Naive thymus-derived CD4-positive, alpha-beta T cell (primary cell): ENCODE measurements at regions of chr7 and their contacts with region 1.

Region 1: DNA sequence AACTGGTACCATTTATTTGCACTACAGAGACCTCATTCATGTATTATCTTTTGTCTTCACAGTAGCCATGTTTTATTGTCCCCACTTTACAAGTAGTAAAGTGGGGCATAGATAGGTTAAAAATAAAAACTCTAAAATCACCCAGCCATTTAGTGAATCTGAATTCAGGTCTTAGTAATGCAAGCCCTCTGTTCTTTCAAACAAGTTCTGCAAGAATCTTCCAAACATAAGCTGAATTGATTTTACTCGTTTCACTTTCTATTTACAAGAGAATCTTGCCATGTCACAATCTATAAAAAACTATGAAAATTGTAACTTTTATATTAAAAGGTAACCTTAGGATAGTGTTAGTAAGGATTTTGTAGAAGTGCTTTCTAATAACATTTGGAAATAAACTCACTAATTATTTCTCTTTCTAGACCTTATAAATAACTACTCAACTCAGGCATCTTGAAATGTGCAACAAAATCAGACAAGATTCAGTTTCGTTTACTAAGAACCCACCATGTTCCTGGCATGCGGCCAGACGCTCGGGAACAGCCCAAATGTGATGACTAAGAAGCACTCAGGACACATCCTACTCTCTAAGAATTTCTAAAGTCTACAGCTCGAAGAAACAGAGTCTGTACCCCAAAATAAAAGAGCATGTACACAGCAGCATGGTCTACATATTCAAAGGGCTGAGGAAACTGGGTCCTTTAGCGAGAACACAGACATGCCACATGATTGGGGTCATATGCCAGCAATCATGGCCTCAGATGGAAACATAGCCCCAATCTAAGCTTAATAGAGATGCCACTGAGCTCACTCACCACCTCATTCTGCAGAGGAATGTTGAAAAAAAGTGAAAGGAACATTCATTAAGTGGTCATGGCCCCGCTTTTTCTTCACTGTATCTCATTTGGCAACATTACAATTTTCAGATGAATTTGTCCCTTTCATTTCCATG is 167.6 kb downstream of the AMPH start:
- DNase-seq: peak; percentile 40 to 75 (median 61)
- ATAC-seq: peak; percentile 69
- H3K4me3 ChIP-seq: peak overlapping the region; percentile 28
- H3K4me3 Mint-ChIP-seq: peak overlapping the region; percentile 53 to 85 (median 70)
- H3K27ac ChIP-seq: no peak overlapping the region
- H3K27ac Mint-ChIP-seq: peak overlapping the region; percentile 13 to 83 (median 78)
- H3K4me1 ChIP-seq: peaks cover 0 to 5% of the 10 kb centered on the region in 2 donors
- H3K4me1 Mint-ChIP-seq: peaks cover 7 to 21% (median 14%) of the 10 kb centered on the region in 7 donors
- H3K27me3 ChIP-seq: no peaks in the 10 kb centered on the region
- H3K27me3 Mint-ChIP-seq: peaks cover 0 to 7% (median 0%) of the 10 kb centered on the region in 5 donors

Region 2: DNA sequence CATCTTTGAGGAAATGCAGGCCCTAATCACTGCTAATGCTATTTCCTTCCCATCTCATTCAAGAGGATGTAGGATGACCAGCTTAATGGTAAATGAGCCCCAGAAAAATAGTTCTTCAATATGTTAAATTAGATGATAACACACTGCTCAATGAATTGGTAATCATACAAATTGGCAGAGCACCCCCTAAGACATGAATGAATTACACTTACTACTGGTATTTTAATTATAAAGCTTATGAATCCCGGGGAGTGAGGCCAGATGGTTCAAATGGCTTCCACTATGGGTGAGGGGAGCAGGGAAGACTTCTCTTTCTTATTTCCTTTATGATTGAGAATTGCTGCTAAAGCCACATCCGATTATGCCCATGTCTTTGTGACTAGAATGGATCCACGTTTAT is 30.9 kb before region 1 on chr7:
- CTCF ChIA-PET with region 1: no interaction called
- POLR2A ChIA-PET with region 1: no interaction called
- intact Hi-C with region 1: loop called (anchors 1 to 5 kb)
- DNase-seq: no peak
- ATAC-seq: no peak
- H3K4me3 ChIP-seq: no peak overlapping the region
- H3K4me3 Mint-ChIP-seq: peak overlapping the region in 2 of 10 donors; percentile 14 to 33
- H3K27ac ChIP-seq: no peak overlapping the region
- H3K27ac Mint-ChIP-seq: peak overlapping the region in 2 of 9 donors; percentile 19 to 33
- H3K4me1 ChIP-seq: peaks cover 2 to 11% of the 10 kb centered on the region in 2 donors
- H3K4me1 Mint-ChIP-seq: peaks cover 5 to 34% (median 25%) of the 10 kb centered on the region in 7 donors
- H3K27me3 ChIP-seq: no peaks in the 10 kb centered on the region
- H3K27me3 Mint-ChIP-seq: no peaks in the 10 kb centered on the region